ENCODE measurements at regions of chr15 and their contacts with region 1.

Region 1: GRCh38 chr15:45166834-45167630 is 20.7 kb downstream of the SHF start:
- DNase-seq: peak; percentile 76 to 83 (median 80)
- H3K4me3 ChIP-seq: peak overlapping the region; percentile 61 to 64
- H3K4me3 Mint-ChIP-seq: peak overlapping the region; percentile 62 to 85 (median 76)
- H3K27ac ChIP-seq: peak overlapping the region; percentile 83
- H3K27ac Mint-ChIP-seq: peak overlapping the region; percentile 75 to 92 (median 78)
- H3K4me1 ChIP-seq: peaks cover 21% of the 10 kb centered on the region
- H3K4me1 Mint-ChIP-seq: peaks cover 0 to 18% (median 6%) of the 10 kb centered on the region in 4 donors
- H3K27me3 ChIP-seq: no peaks in the 10 kb centered on the region
- H3K27me3 Mint-ChIP-seq: no peaks in the 10 kb centered on the region

Region 2: GRCh38 chr15:45118131-45118588 is 48.9 kb before region 1 on chr15:
- CTCF ChIA-PET with region 1: interaction called, 10 read pairs
- POLR2A ChIA-PET with region 1: interaction called, 5 read pairs
- intact Hi-C with region 1: no loop called
- DNase-seq: peak; percentile 77 to 84 (median 79)
- H3K4me3 ChIP-seq: no peak overlapping the region
- H3K4me3 Mint-ChIP-seq: peak overlapping the region; percentile 67 to 94 (median 86)
- H3K27ac ChIP-seq: no peak overlapping the region
- H3K27ac Mint-ChIP-seq: peak overlapping the region in 1 of 7 donors; percentile 62
- H3K4me1 ChIP-seq: peaks cover 32% of the 10 kb centered on the region
- H3K4me1 Mint-ChIP-seq: peaks cover 20 to 48% (median 36%) of the 10 kb centered on the region in 4 donors
- H3K27me3 ChIP-seq: peaks cover 44% of the 10 kb centered on the region
- H3K27me3 Mint-ChIP-seq: peaks cover 52 to 61% of the 10 kb centered on the region in 2 donors

Region 3: GRCh38 chr15:45179221-45179985 is 12.4 kb after region 1 on chr15:
- CTCF ChIA-PET with region 1: interaction called, 30 read pairs
- POLR2A ChIA-PET with region 1: interaction called, 4 read pairs
- intact Hi-C with region 1: no loop called
- DNase-seq: peak; percentile 33 to 54 (median 42)
- H3K4me3 ChIP-seq: no peak overlapping the region
- H3K4me3 Mint-ChIP-seq: no peak overlapping the region
- H3K27ac ChIP-seq: no peak overlapping the region
- H3K27ac Mint-ChIP-seq: peak overlapping the region in 1 of 7 donors; percentile 73
- H3K4me1 ChIP-seq: no peaks in the 10 kb centered on the region
- H3K4me1 Mint-ChIP-seq: peaks cover 4 to 10% (median 8%) of the 10 kb centered on the region in 4 donors
- H3K27me3 ChIP-seq: no peaks in the 10 kb centered on the region
- H3K27me3 Mint-ChIP-seq: no peaks in the 10 kb centered on the region

Region 4: GRCh38 chr15:45205192-45205591 is 38.2 kb after region 1 on chr15:
- CTCF ChIA-PET with region 1: interaction called, 35 read pairs
- POLR2A ChIA-PET with region 1: interaction called, 69 read pairs
- intact Hi-C with region 1: no loop called
- DNase-seq: peak; percentile 50 to 71 (median 55)
- H3K4me3 ChIP-seq: no peak overlapping the region
- H3K4me3 Mint-ChIP-seq: peak overlapping the region in 2 of 8 donors; percentile 44 to 48
- H3K27ac ChIP-seq: no peak overlapping the region
- H3K27ac Mint-ChIP-seq: peak overlapping the region in 3 of 7 donors; percentile 19 to 62 (median 53)
- H3K4me1 ChIP-seq: peaks cover 8% of the 10 kb centered on the region
- H3K4me1 Mint-ChIP-seq: peaks cover 0 to 7% (median 3%) of the 10 kb centered on the region in 4 donors
- H3K27me3 ChIP-seq: no peaks in the 10 kb centered on the region
- H3K27me3 Mint-ChIP-seq: peaks cover 12 to 15% of the 10 kb centered on the region in 2 donors

Region 5: DNA sequence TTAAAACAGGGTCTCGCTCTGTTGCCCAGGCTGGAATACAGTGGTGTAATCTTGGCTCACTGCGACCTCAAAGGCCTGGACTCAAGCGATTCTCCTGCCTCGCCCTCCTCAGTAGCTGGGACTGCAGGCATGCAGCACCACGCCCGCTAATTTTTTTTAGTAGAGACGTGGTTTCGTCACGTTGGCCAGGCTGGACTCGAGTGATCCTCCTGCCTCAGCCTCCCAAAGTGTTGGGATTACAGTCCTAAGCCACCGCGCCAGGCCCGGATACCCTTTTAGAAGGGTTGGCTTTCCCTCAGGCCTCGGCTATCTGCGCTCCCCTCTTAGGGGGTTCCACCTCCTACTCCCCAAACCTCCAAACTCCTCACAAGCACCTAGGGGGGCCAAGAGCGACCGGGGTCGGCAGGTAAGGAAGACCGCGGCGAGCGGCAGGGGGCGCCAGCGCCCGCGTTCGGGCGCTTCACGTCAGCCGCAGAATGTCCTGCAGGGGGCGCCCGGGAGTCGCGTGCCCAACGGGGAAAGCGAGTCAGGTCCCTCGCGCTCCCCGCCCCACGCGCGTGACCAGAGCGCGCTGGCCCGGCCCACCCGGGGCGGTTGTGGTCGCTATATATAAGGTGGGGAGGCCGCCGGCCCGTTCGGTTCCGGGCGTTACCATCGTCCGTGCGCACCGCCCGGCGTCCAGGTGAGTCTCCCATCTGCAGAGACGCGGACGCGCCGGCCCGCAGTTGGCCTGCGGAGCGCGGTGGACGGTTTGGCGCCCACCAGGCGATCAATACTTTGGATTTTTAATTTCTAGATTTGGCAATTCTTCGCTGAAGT is 263.2 kb after region 1 on chr15:
- CTCF ChIA-PET with region 1: interaction called, 10 read pairs
- POLR2A ChIA-PET with region 1: no interaction called
- intact Hi-C with region 1: no loop called
- DNase-seq: peak; percentile 78 to 84 (median 80)
- H3K4me3 ChIP-seq: peak overlapping the region; percentile 44 to 56
- H3K4me3 Mint-ChIP-seq: peak overlapping the region in 7 of 8 donors; percentile 9 to 70 (median 44)
- H3K27ac ChIP-seq: no peak overlapping the region
- H3K27ac Mint-ChIP-seq: no peak overlapping the region
- H3K4me1 ChIP-seq: peaks cover 12% of the 10 kb centered on the region
- H3K4me1 Mint-ChIP-seq: no peaks in the 10 kb centered on the region
- H3K27me3 ChIP-seq: no peaks in the 10 kb centered on the region
- H3K27me3 Mint-ChIP-seq: peaks cover 0 to 4% of the 10 kb centered on the region in 2 donors

Measured in CD4-positive, alpha-beta memory T cell (primary cell).